ENCODE measurements at regions of chr16 and their contacts with region 1.

Region 1: GRCh38 chr16:50152807-50153452 is at the start of gene TENT4B:
- DNase-seq: peak; percentile 92 to 95 (median 94)
- H3K4me3 ChIP-seq: peak within 1 kb of the TSS; percentile 84 to 93
- H3K4me3 Mint-ChIP-seq: peak within 1 kb of the TSS; percentile 91 to 97 (median 94)
- H3K27ac ChIP-seq: peak within 1 kb of the TSS; percentile 89
- H3K27ac Mint-ChIP-seq: peak within 1 kb of the TSS; percentile 93 to 99 (median 97)
- H3K4me1 ChIP-seq: peaks cover 47% of the 10 kb centered on the region
- H3K4me1 Mint-ChIP-seq: peaks cover 25 to 41% (median 34%) of the 10 kb centered on the region in 4 donors
- H3K27me3 ChIP-seq: no peaks in the 10 kb centered on the region
- H3K27me3 Mint-ChIP-seq: no peaks in the 10 kb centered on the region
- total RNA-seq, gene TENT4B: 22.4 to 23.5 TPM

Region 2: DNA sequence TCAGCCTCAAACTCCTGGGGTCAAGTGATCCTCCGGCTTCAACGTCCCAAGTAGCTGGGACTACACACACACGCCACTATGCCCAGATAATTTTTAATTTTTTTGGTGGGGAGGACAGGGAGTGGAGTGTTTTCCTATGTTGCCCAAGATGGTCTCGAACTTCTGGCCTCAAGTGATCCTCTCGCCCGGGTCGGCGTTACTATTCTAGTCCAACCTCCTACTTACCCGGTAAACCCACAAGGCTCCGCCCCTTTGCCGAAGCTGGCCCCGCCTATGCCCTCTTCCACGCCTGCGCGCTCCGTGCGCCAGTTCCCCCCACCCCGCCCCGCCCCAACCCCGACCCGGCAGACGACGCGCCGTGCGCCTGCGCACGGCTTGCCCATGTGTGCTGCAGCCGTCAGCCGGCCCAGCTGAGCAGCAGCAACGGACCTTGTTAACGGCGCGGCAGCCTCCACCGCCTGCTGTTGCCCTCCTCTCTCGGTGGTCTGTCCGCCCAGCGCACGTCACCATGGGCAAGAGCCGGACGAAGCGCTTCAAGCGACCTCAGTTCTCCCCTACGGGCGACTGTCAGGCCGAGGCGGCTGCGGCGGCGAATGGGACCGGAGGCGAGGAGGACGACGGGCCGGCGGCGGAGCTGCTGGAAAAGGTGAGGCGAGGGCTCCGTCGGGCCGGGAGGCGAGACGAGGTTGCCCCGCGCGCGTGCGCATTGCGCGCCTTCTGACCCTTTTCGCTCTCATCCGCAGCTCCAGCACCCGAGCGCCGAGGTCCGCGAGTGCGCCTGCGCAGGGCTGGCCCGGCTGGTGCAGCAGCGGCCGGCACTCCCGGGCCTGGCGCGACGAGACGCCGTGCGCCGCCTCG is 87.1 kb before region 1 on chr16 and contains the start of gene HEATR3:
- CTCF ChIA-PET with region 1: interaction called, 4 read pairs
- POLR2A ChIA-PET with region 1: interaction called, 23 read pairs
- intact Hi-C with region 1: loop called (anchors 1 kb)
- DNase-seq: peak; percentile 89 to 92 (median 91)
- H3K4me3 ChIP-seq: peak within 1 kb of the TSS; percentile 82 to 98
- H3K4me3 Mint-ChIP-seq: peak within 1 kb of the TSS; percentile 90 to 97 (median 93)
- H3K27ac ChIP-seq: peak within 1 kb of the TSS; percentile 79
- H3K27ac Mint-ChIP-seq: peak within 1 kb of the TSS; percentile 77 to 96 (median 94)
- H3K4me1 ChIP-seq: peaks cover 33% of the 10 kb centered on the region
- H3K4me1 Mint-ChIP-seq: peaks cover 28 to 47% (median 35%) of the 10 kb centered on the region in 4 donors
- H3K27me3 ChIP-seq: no peaks in the 10 kb centered on the region
- H3K27me3 Mint-ChIP-seq: no peaks in the 10 kb centered on the region
- total RNA-seq, gene HEATR3: 20.5 to 25.6 TPM

Region 3: DNA sequence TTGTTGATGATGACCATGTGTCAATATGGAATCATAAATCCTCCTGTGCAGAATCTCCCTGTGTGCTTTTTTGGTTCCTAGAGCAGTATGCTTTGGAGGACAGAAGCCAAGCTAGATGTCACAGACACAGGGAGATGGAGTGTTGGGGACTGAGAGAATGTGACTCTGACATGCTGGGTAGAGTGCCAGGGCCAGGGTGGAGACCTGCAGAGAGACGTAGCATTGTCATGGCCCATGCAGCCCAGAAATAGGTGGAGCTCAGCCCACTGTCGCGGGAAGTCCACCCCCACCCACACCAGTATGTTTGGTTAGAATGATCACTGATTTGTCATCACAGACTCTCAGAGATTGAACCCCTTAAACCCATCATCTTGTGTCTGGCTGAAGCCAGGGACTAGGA is 74.2 kb after region 1 on chr16:
- CTCF ChIA-PET with region 1: no interaction called
- POLR2A ChIA-PET with region 1: no interaction called
- intact Hi-C with region 1: no loop called
- DNase-seq: no peak
- H3K4me3 ChIP-seq: no peak overlapping the region
- H3K4me3 Mint-ChIP-seq: no peak overlapping the region
- H3K27ac ChIP-seq: no peak overlapping the region
- H3K27ac Mint-ChIP-seq: peak overlapping the region in 1 of 7 donors; percentile 13
- H3K4me1 ChIP-seq: no peaks in the 10 kb centered on the region
- H3K4me1 Mint-ChIP-seq: peaks cover 0 to 1% (median 0%) of the 10 kb centered on the region in 4 donors
- H3K27me3 ChIP-seq: no peaks in the 10 kb centered on the region
- H3K27me3 Mint-ChIP-seq: no peaks in the 10 kb centered on the region

Region 4: GRCh38 chr16:51638339-51639135 is 1485.6 kb after region 1 on chr16:
- CTCF ChIA-PET with region 1: no interaction called
- POLR2A ChIA-PET with region 1: no interaction called
- intact Hi-C with region 1: no loop called
- DNase-seq: no peak
- H3K4me3 ChIP-seq: no peak overlapping the region
- H3K4me3 Mint-ChIP-seq: no peak overlapping the region
- H3K27ac ChIP-seq: no peak overlapping the region
- H3K27ac Mint-ChIP-seq: no peak overlapping the region
- H3K4me1 ChIP-seq: no peaks in the 10 kb centered on the region
- H3K4me1 Mint-ChIP-seq: no peaks in the 10 kb centered on the region
- H3K27me3 ChIP-seq: no peaks in the 10 kb centered on the region
- H3K27me3 Mint-ChIP-seq: no peaks in the 10 kb centered on the region

Measured in CD4-positive, alpha-beta memory T cell (primary cell).